GM10248 (cell line): ENCODE measurements at regions of chr4 and their contacts with region 1.

Region 1: DNA sequence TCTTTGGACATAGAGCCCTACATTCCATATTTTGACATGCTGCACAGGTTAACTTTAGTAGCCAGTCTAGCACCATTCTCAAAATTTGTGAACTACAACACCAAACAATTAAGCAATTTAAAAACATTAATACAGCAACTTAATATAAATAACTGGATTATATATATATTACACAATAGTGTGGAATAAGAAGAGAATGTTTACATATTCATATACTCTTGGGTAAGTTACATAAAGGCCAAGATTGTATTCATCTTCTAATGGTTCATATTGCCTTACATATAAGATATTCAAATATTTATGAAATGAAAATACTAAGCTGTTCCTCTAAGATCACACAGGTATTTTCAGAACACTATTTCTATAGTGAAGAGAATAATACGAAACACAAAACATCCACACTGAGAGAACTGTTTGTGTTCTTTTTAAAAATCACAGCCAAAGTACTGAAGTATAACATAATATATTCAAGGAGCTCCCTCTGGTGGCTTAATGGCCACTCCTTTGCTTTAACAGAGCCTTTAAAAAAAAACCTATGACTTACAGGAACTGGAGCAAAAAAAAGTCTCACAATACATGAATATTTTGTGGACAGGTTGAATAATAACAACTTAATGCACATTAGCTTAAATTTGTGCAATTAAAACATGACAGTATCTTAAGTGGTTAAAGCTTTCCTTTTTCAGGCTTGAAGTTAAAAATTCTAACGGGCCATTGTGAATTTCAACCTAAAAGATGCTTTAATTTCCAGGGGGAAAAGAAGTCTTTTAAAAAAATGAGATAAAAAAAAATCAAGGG is 46.2 kb downstream of the NEK1 start:
- DNase-seq: peak; percentile 53
- CTCF ChIP-seq: peak; percentile 57

Region 2: GRCh38 chr4:169582205-169582604 is 16.0 kb after region 1 on chr4:
- CTCF ChIA-PET with region 1: interaction called, 14 read pairs
- POLR2A ChIA-PET with region 1: no interaction called
- DNase-seq: no peak
- CTCF ChIP-seq: peak; percentile 4

Region 3: GRCh38 chr4:169593050-169593560 is 26.9 kb after region 1 on chr4:
- CTCF ChIA-PET with region 1: no interaction called
- POLR2A ChIA-PET with region 1: no interaction called
- DNase-seq: no peak
- CTCF ChIP-seq: no peak